ENCODE measurements at regions of chr15 and their contacts with region 1.

Region 1: GRCh38 chr15:70679919-70680231 is 83.5 kb downstream of the UACA start:
- DNase-seq: no peak
- ATAC-seq: no peak
- H3K4me3 ChIP-seq: no peak overlapping the region
- H3K27ac ChIP-seq: no peak overlapping the region
- H3K4me1 ChIP-seq: no peaks in the 10 kb centered on the region
- H3K27me3 ChIP-seq: no peaks in the 10 kb centered on the region
- CTCF ChIP-seq: peak in 1 of 7 experiments; percentile 2
- POLR2A ChIP-seq: no peak

Region 2: DNA sequence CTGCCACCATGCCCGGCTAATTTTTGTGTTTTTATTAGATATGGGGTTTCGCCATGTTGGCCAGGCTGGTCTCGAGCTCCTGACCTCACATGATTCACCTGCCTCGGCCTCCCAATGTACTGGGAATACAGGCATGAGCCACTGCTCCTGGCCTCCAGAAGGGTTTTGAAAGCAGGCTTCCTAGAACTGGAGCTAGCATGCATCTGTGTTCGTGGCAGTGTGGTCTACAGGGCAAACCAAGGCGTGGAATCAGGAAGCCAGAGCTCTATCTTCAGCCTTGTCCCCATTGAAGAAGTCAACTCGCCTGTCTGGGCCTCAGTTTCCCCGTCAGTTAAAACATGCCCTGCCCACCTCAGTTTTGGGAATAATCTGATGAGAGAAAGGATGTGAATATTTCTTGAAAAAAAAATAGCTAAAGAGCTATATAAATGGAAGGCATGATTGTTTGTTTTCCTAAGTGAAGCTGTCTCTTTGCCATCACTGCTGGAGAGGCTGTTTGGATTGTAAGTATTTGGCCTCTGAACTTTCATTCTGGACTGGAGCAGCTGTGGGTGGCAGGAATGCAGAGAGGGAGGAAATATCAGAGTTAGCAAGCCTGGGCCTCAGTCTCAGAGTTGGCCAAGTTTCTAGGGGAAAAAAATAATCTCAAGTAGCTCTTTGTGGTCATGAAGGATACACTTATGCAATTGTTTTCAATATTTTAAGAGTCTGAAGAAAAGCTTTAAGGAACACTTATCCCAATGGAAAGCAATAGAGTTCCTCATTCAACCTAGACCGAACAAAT is 120.0 kb after region 1 on chr15:
- intact Hi-C with region 1: loop called (anchors 10 kb)
- DNase-seq: peak in 2 of 4 donors; percentile 19 to 37
- ATAC-seq: peak; percentile 70
- H3K4me3 ChIP-seq: no peak overlapping the region
- H3K27ac ChIP-seq: peak overlapping the region in 2 of 4 donors; percentile 9 to 45
- H3K4me1 ChIP-seq: peaks cover 11% of the 10 kb centered on the region
- H3K27me3 ChIP-seq: no peaks in the 10 kb centered on the region
- CTCF ChIP-seq: no peak
- POLR2A ChIP-seq: no peak